ENCODE measurements at regions of chr6 and their contacts with region 1.

Region 1: GRCh38 chr6:89352278-89353117 is at the start of gene UBE2J1:
- DNase-seq: peak; percentile 71
- H3K4me3 ChIP-seq: peak within 1 kb of the TSS; percentile 63
- H3K27ac ChIP-seq: peak within 1 kb of the TSS; percentile 97
- H3K4me1 ChIP-seq: peaks cover 31% of the 10 kb centered on the region
- H3K27me3 ChIP-seq: no peaks in the 10 kb centered on the region
- CTCF ChIP-seq: no peak
- total RNA-seq, gene UBE2J1: 36.1 and 38.6 TPM in 2 replicates

Region 2: GRCh38 chr6:88855541-88856147 is 496.9 kb before region 1 on chr6:
- CTCF ChIA-PET with region 1: no interaction called
- POLR2A ChIA-PET with region 1: no interaction called
- intact Hi-C with region 1: no loop called
- DNase-seq: no peak
- H3K4me3 ChIP-seq: no peak overlapping the region
- H3K27ac ChIP-seq: no peak overlapping the region
- H3K4me1 ChIP-seq: no peaks in the 10 kb centered on the region
- H3K27me3 ChIP-seq: no peaks in the 10 kb centered on the region
- CTCF ChIP-seq: no peak

Region 3: GRCh38 chr6:89297695-89298351 is 54.7 kb before region 1 on chr6:
- CTCF ChIA-PET with region 1: no interaction called
- POLR2A ChIA-PET with region 1: no interaction called
- intact Hi-C with region 1: loop called (anchors 5 kb)
- DNase-seq: peak; percentile 91
- H3K4me3 ChIP-seq: no peak overlapping the region
- H3K27ac ChIP-seq: peak overlapping the region; percentile 74
- H3K4me1 ChIP-seq: peaks cover 26% of the 10 kb centered on the region
- H3K27me3 ChIP-seq: no peaks in the 10 kb centered on the region
- CTCF ChIP-seq: no peak